Breast epithelium (tissue), 4 donors: ENCODE measurements at regions of chr19 and their contacts with region 1.

Region 1: DNA sequence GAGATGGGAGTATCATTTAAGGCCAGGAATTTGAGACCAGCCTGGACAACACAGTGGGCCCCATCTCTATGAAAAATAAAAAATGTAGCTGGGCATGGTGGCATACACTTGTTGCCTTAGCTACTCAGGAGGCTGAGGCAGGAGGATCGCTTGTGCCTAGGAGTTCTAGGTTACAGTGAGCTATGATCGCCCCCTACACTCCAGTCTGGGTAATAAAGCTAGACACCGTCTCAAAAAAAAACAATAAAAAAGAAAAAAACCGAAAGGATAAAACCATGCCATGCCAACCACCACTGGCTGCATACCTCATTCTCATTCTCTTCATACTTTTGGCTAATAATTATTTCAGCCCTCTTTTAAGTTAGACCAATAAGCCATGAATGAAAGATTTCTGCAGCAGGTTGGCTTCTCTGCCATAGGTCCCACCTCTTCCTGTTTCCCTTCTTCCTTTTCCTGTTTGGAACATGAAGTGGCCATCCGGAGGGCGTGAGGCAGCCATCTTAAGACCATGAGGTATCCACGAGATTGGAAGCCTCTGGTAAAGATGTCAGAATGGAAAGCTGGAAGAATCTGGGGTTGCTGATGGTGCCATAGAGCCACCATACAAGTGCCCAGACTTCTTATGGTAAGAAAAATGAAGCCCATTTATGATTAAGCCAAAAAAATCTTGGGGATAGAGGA is 171.3 kb downstream of the CACNA1A start:
- DNase-seq: no peak
- H3K4me3 ChIP-seq: no peak overlapping the region
- H3K27ac ChIP-seq: no peak overlapping the region
- H3K4me1 ChIP-seq: no peaks in the 10 kb centered on the region
- H3K27me3 ChIP-seq: no peaks in the 10 kb centered on the region
- CTCF ChIP-seq: no peak
- POLR2A ChIP-seq: no peak

Region 2: DNA sequence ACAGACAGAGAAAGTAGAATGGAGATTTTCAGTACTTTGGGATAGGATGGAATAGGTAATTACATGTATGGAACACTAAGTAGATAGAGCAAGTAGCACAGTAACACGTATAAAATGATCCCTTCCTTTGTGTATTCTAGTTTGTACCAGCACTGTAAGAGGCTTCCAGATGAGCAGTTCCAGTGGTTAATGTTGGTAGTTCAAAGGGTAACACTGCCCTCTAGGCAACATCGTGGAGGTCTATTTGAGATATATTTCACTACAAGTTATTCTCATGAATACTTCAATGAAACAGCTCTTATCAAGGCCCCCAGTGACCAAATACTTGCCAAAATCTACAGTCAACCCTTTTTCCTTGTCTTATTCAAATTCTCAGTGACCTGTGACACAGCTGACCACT is 988.0 kb before region 1 on chr19:
- intact Hi-C with region 1: loop called (anchors 10 kb)
- DNase-seq: no peak
- H3K4me3 ChIP-seq: no peak overlapping the region
- H3K27ac ChIP-seq: no peak overlapping the region
- H3K4me1 ChIP-seq: no peaks in the 10 kb centered on the region
- H3K27me3 ChIP-seq: no peaks in the 10 kb centered on the region
- CTCF ChIP-seq: no peak
- POLR2A ChIP-seq: no peak

Region 3: GRCh38 chr19:13162518-13163314 is 172.2 kb before region 1 on chr19:
- intact Hi-C with region 1: no loop called
- DNase-seq: peak; percentile 99
- H3K4me3 ChIP-seq: peak overlapping the region; percentile 38 to 66 (median 52)
- H3K27ac ChIP-seq: peak overlapping the region; percentile 95 to 99
- H3K4me1 ChIP-seq: peaks cover 7 to 33% of the 10 kb centered on the region in 2 donors
- H3K27me3 ChIP-seq: no peaks in the 10 kb centered on the region
- CTCF ChIP-seq: no peak
- POLR2A ChIP-seq: no peak